OCI-LY7 (cell line): ENCODE measurements at regions of chr12 and their contacts with region 1.

Region 1: GRCh38 chr12:66301944-66302826 is at the start of gene HELB:
- DNase-seq: peak; percentile 96
- H3K4me3 ChIP-seq: peak within 1 kb of the TSS; percentile 73
- H3K27ac ChIP-seq: peak within 1 kb of the TSS; percentile 16
- H3K4me1 ChIP-seq: peaks cover 31% of the 10 kb centered on the region
- CTCF ChIP-seq: no peak
- total RNA-seq, gene HELB: 3.8 and 6.0 TPM in 2 replicates

Region 2: GRCh38 chr12:66130277-66131066 is 171.7 kb before region 1 on chr12 and contains the start of gene LLPH:
- CTCF ChIA-PET with region 1: no interaction called
- POLR2A ChIA-PET with region 1: interaction called, 10 read pairs
- intact Hi-C with region 1: loop called (anchors 5 kb)
- DNase-seq: peak; percentile 95
- H3K4me3 ChIP-seq: peak within 1 kb of the TSS; percentile 98
- H3K27ac ChIP-seq: peak within 1 kb of the TSS; percentile 51
- H3K4me1 ChIP-seq: peaks cover 29% of the 10 kb centered on the region
- CTCF ChIP-seq: no peak
- total RNA-seq, gene LLPH: 5.7 and 17.0 TPM in 2 replicates

Region 3: GRCh38 chr12:66196806-66197205 is 105.4 kb before region 1 on chr12:
- CTCF ChIA-PET with region 1: no interaction called
- POLR2A ChIA-PET with region 1: interaction called, 10 read pairs
- intact Hi-C with region 1: no loop called
- DNase-seq: peak; percentile 74
- H3K4me3 ChIP-seq: peak overlapping the region; percentile 36
- H3K27ac ChIP-seq: peak overlapping the region; percentile 48
- H3K4me1 ChIP-seq: peaks cover 34% of the 10 kb centered on the region
- CTCF ChIP-seq: no peak

Region 4: GRCh38 chr12:66329941-66330340 is 27.8 kb after region 1 on chr12:
- CTCF ChIA-PET with region 1: no interaction called
- POLR2A ChIA-PET with region 1: no interaction called
- intact Hi-C with region 1: no loop called
- DNase-seq: no peak
- H3K4me3 ChIP-seq: no peak overlapping the region
- H3K27ac ChIP-seq: no peak overlapping the region
- H3K4me1 ChIP-seq: no peaks in the 10 kb centered on the region
- CTCF ChIP-seq: no peak

Region 5: GRCh38 chr12:66417217-66417616 is 115.0 kb after region 1 on chr12:
- CTCF ChIA-PET with region 1: no interaction called
- POLR2A ChIA-PET with region 1: no interaction called
- intact Hi-C with region 1: no loop called
- DNase-seq: no peak
- H3K4me3 ChIP-seq: no peak overlapping the region
- H3K27ac ChIP-seq: no peak overlapping the region
- H3K4me1 ChIP-seq: no peaks in the 10 kb centered on the region
- CTCF ChIP-seq: no peak

Region 6: DNA sequence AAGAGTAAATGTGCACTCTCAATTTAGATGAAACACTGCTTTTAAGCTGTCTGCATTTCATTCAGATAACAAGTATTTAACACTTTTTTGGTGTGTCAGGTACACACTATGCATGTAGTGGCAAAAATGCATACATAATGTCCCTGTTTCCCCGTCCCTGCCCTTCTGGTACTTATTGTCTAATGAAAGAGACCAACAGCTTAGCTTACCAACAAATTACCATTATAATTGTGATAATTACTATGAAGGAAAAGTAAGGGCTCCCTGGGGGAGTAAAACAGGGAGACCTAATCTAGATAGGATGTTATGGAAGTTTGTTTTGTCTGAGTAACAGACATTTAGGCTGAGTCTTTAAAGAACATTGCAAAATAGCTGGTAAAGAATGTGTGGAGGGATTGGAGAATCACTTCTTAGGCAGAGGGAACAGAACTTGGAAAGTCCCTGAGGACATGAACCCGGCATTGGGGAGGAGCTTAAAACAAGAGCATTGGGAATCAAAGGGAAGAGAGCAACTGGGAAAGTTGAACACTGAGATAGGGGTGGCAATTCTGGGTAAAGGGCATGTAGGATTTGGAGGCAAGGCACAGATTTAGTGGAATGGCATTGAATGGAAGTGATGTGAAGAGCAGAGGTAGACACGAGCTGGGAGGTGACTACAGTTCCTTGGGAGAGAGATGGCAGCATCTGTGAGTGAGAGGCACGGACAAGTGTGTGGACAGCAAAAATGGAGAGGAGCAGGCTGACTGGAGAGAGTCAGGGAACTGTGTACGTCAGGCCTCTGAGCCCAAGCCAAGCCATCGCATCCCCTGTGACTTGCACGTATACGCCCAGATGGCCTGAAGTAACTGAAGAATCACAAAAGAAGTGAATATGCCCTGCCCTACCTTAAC is 195.1 kb after region 1 on chr12:
- CTCF ChIA-PET with region 1: interaction called, 24 read pairs
- POLR2A ChIA-PET with region 1: no interaction called
- intact Hi-C with region 1: no loop called
- DNase-seq: no peak
- H3K4me3 ChIP-seq: no peak overlapping the region
- H3K27ac ChIP-seq: no peak overlapping the region
- H3K4me1 ChIP-seq: no peaks in the 10 kb centered on the region
- CTCF ChIP-seq: no peak

Region 7: DNA sequence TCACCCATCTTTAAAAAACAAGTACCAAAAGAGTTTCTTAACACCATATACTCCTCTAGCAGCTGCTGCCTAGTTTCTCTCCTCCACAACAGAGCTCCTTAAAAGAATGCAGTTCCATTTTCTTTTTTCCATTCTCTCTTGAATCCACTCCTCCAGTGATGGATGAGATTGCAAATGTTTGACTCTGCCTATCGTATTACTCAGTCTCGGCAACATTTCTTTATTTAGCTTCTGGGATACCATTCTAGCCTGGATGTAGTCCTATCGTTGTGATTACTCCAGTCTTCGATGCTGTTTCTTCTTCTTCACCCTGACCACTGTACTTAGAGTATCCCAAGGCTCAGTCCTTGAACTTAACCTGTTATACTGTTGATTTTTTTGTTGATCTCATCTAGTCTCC is 997.7 kb after region 1 on chr12:
- CTCF ChIA-PET with region 1: interaction called, 17 read pairs
- POLR2A ChIA-PET with region 1: no interaction called
- intact Hi-C with region 1: no loop called
- DNase-seq: no peak
- H3K4me3 ChIP-seq: no peak overlapping the region
- H3K27ac ChIP-seq: no peak overlapping the region
- H3K4me1 ChIP-seq: no peaks in the 10 kb centered on the region
- CTCF ChIP-seq: no peak

Region 8: DNA sequence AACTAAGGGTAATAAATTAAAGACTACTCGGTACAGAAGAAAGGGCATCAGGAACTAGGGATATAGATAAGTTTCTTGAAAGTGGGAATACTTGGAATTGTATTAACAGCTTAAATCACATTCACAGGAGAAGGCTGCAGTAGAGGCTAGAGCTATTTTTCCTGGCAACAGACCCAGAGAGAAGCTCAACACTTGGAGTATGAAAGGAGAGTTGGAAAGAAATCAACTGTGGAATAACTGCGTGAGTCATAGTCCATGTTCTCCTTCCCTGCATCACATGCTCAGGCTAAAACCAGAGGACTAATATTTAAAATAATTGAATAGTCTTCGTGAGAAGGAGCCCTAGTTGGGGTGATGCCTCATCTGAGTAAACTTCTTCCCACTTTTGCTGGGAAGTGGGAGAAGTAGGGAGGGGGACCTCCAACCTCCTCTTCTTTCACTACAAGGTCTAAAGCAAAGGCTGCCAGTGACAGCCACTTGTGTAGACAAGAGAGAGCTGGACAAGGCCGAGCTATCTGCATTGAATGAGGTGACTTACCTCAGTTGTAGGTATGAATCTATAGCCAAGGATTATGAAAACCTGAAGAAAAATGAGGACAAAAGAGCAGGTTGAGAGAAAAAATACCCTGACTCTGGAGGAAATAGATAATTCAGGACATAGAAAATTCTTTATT is 1379.1 kb after region 1 on chr12:
- CTCF ChIA-PET with region 1: no interaction called
- POLR2A ChIA-PET with region 1: no interaction called
- intact Hi-C with region 1: no loop called
- DNase-seq: no peak
- H3K4me3 ChIP-seq: no peak overlapping the region
- H3K27ac ChIP-seq: no peak overlapping the region
- H3K4me1 ChIP-seq: peaks cover 6% of the 10 kb centered on the region
- CTCF ChIP-seq: no peak